Posterior cingulate gyrus (tissue), 11 donors: ENCODE measurements at regions of chr15 and their contacts with region 1.

Region 1: DNA sequence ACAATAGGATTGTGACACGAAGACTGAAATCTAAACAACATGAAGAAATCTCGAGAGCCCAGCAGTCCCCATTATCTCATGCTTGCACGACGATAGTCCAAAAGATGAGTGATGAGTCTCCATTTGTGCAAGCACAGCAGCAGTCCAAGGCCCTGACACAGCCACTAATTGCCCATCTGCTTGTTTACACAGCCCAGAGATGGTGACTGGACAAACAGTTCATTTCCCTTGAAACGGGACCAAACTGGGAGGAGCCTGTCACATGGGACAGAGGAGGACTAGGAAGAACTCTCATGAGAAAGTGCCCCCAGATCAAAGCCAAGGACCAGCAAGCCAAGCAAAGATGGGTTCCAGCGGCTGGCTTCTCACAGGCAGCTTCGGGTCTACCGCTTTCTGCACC is 121.0 kb downstream of the GREM1 start:
- DNase-seq: peak in 8 of 10 donors; percentile 29 to 91 (median 69)

Region 2: GRCh38 chr15:32669896-32670619 is 168.8 kb before region 1 on chr15:
- intact Hi-C with region 1: loop called (anchors 5 kb)
- DNase-seq: peak; percentile 41 to 95 (median 71)

Region 3: GRCh38 chr15:32763295-32763694 is 75.5 kb before region 1 on chr15:
- intact Hi-C with region 1: no loop called
- DNase-seq: no peak

Region 4: GRCh38 chr15:32899126-32899596 is 60.3 kb after region 1 on chr15:
- intact Hi-C with region 1: no loop called
- DNase-seq: no peak

Region 5: GRCh38 chr15:33392453-33392852 is 553.6 kb after region 1 on chr15:
- intact Hi-C with region 1: no loop called
- DNase-seq: no peak